ENCODE measurements at regions of chr22 and their contacts with region 1.

Region 1: GRCh38 chr22:41746567-41747400 is 47.5 kb downstream of the MEI1 start:
- DNase-seq: peak; percentile 69
- CTCF ChIP-seq: peak; percentile 79

Region 2: DNA sequence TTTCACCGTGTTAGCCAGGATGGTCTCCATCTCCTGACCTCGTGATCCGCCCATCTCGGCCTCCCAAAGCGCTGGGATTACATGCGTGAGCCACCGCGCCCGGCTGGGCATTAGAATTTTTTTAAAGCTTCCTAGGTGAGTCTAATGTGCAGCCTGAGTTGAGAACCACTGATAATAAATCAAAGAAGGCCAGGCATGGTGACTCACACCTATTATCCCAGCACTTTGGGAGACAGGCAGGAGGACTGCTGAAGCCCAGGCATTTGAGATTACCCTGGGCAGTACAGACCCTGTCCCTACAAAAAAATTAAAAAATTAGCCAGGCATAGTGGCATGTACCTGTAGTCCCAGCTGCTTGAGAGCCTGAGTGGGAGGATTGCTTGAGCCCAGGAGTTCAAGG is 33.8 kb before region 1 on chr22:
- CTCF ChIA-PET with region 1: interaction called, 14 read pairs
- POLR2A ChIA-PET with region 1: no interaction called
- DNase-seq: no peak
- CTCF ChIP-seq: no peak

Region 3: GRCh38 chr22:41757502-41757901 is 10.7 kb after region 1 on chr22:
- CTCF ChIA-PET with region 1: interaction called, 20 read pairs
- POLR2A ChIA-PET with region 1: no interaction called
- DNase-seq: no peak
- CTCF ChIP-seq: no peak

Region 4: DNA sequence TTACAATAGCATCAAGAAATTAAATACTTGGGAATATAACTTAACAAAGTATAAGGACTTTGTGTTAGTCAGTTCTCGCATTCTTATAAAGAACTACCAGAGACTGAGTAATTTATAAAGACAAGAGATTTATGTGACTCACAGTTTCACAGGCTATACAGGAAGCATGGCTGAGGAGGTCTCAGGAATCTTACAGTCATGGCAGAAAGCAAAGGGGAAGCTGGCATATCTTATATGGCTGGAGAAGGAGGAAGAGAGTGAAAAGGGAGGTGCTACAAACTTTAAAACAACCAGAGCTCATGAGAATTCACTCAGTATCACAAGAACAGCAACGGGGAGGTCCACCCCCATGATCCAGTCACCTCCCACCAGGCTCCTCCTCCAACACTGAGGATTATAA is 21.6 kb after region 1 on chr22:
- CTCF ChIA-PET with region 1: interaction called, 19 read pairs
- POLR2A ChIA-PET with region 1: no interaction called
- DNase-seq: no peak
- CTCF ChIP-seq: no peak

Region 5: DNA sequence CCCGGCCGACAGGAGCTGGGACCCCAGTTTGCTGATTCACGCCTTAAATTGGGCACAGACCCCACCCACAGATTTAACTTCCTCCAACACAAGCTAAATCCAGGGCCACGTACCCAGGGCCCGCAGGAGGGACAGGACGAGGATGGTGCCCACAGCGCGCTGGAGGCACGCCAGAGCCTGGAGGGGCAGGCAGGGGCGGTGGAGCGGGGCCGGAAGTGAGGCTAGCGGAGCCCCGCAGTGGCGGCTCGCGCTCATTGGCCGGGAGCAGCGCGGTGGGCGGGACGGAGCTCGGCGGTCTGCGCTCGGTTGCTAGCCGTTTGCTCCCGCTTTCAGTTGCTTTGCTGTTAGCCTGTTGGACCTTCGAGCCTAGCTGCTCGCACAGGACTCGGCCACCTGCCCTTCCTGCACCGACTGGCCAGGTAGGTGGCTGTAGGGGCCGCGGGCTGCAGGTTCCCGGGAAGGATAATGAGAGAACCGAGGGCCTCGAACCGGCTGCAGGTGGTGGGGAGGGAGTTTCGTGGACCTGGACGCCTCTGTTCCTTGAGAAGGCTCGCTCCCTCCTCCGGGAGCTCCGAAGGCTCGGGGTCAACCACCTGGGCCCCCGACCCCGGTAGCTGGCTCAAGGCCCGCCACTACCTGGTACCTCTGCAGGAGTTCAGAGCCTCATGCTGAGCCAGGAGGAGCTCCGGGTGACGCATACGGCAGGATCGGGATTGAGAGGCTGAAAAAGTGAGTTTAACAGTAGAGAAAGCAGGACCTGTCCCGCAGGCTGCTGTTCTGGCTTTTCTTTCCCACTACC is 53.8 kb after region 1 on chr22 and contains the start of gene CCDC134:
- CTCF ChIA-PET with region 1: interaction called, 21 read pairs
- POLR2A ChIA-PET with region 1: interaction called, 3 read pairs
- DNase-seq: peak; percentile 97
- CTCF ChIP-seq: no peak

Measured in GM10248 (cell line).